Thyroid gland (tissue), 4 donors: ENCODE measurements at regions of chr1 and their contacts with region 1.

Region 1: GRCh38 chr1:91165033-91165654 is 143.3 kb upstream of the ZNF644 start:
- DNase-seq: peak; percentile 83 to 87
- H3K4me3 ChIP-seq: no peak overlapping the region
- H3K27ac ChIP-seq: no peak overlapping the region
- H3K4me1 ChIP-seq: peaks cover 7 to 26% of the 10 kb centered on the region in 2 donors
- H3K27me3 ChIP-seq: no peaks in the 10 kb centered on the region
- CTCF ChIP-seq: peak; percentile 75 to 95 (median 90)
- POLR2A ChIP-seq: no peak

Region 2: GRCh38 chr1:90721210-90722194 is 443.6 kb before region 1 on chr1:
- intact Hi-C with region 1: loop called (anchors 10 kb)
- DNase-seq: peak; percentile 36 to 72
- H3K4me3 ChIP-seq: no peak overlapping the region
- H3K27ac ChIP-seq: no peak overlapping the region
- H3K4me1 ChIP-seq: peaks cover 35 to 58% of the 10 kb centered on the region in 2 donors
- H3K27me3 ChIP-seq: peaks cover 62% of the 10 kb centered on the region
- CTCF ChIP-seq: peak; percentile 20 to 77 (median 46)
- POLR2A ChIP-seq: no peak

Region 3: GRCh38 chr1:90959352-90960206 is 205.6 kb before region 1 on chr1:
- intact Hi-C with region 1: no loop called
- DNase-seq: no peak
- H3K4me3 ChIP-seq: no peak overlapping the region
- H3K27ac ChIP-seq: no peak overlapping the region
- H3K4me1 ChIP-seq: no peaks in the 10 kb centered on the region
- H3K27me3 ChIP-seq: no peaks in the 10 kb centered on the region
- CTCF ChIP-seq: no peak
- POLR2A ChIP-seq: no peak

Region 4: GRCh38 chr1:91635763-91636162 is 470.6 kb after region 1 on chr1:
- intact Hi-C with region 1: no loop called
- DNase-seq: no peak
- H3K4me3 ChIP-seq: no peak overlapping the region
- H3K27ac ChIP-seq: no peak overlapping the region
- H3K4me1 ChIP-seq: peaks cover 8 to 9% of the 10 kb centered on the region in 2 donors
- H3K27me3 ChIP-seq: no peaks in the 10 kb centered on the region
- CTCF ChIP-seq: no peak
- POLR2A ChIP-seq: no peak